ENCODE measurements at regions of chr6 and their contacts with region 1.

Region 1: DNA sequence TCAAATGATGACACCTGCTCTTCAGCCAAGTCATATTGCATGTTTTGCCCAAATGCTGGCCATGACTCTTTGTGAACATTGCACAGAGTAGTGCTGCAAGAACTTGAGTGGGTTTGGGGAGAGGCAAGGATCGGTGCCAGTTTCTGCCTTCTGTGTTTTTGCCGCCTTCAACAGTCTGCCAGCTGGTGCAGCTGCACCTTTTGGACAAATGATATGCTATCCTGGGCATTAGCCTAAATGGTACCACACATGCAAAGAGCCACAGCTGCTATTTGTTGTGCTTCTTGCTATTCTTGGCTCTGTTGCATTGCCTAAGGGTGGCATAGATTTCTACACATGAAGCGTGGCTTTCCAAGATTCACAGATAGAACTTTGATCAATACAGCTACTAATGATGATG is 189.0 kb upstream of the CCN2 start:
- DNase-seq: no peak

Region 2: GRCh38 chr6:131949909-131950766 is 190.1 kb before region 1 on chr6:
- intact Hi-C with region 1: loop called (anchors 5 kb)
- DNase-seq: peak; percentile 81

Measured in cardiac septum (tissue), 1 donor.